Panc1 (cell line): ENCODE measurements at regions of chr18 and their contacts with region 1.

Region 1: GRCh38 chr18:22026889-22027288 is 142.5 kb upstream of the GATA6 start:
- DNase-seq: no peak
- ATAC-seq: no peak
- H3K4me3 ChIP-seq: no peak overlapping the region
- H3K27ac ChIP-seq: no peak overlapping the region
- H3K4me1 ChIP-seq: peaks cover 3% of the 10 kb centered on the region; the same call in 1 of the 2 replicates
- H3K27me3 ChIP-seq: no peaks in the 10 kb centered on the region
- CTCF ChIP-seq: no peak

Region 2: DNA sequence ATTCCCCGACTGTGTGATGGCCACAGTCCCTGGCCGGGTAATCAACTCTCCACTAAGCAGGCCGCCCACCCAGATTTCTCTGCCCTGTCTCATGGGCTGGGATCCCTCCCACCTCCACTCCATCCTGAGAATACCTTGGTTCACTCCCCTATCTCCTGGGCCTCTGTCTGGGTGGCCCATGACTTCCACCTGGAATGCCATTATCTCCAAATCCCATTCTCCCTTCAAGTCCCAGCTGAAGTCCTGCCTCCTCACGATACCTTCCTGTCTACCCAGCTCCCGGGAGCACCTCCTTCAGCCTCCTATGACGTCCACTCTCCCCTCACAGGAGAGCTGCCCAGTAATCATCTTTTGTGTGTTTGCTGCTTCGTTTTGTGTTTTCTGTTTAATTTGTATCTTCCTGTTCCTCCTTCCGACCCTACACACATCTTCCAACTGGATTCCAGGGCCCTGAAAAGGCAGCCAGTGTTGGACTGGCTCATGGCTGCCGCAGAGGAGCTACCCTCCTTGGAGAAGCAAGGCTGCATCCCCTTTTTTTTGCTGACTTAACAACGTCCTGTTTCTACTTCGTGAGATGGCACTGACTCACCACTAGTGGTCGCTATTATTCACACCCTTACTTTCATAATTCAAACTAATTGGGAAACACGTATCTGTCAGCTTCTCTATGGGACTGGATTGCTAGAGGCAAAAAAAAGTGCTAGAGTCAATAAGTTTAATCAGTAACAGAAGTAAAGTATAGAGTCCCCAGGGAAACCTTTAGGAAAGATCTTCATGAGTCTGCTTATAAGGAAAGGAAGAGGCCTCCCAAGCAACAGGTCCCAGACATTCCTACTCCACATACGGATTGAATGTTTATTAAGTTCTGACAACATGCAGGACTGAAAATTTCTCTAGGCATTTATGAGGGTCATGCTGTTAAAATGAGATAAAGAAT is 29.4 kb before region 1 on chr18:
- CTCF ChIA-PET with region 1: interaction called, 12 read pairs
- POLR2A ChIA-PET with region 1: no interaction called
- in situ Hi-C with region 1: no loop called
- intact Hi-C with region 1: no loop called
- DNase-seq: peak; percentile 46
- ATAC-seq: peak; percentile 73
- H3K4me3 ChIP-seq: no peak overlapping the region
- H3K27ac ChIP-seq: no peak overlapping the region
- H3K4me1 ChIP-seq: no peaks in the 10 kb centered on the region
- H3K27me3 ChIP-seq: no peaks in the 10 kb centered on the region
- CTCF ChIP-seq: peak; percentile 90

Region 3: GRCh38 chr18:22214731-22215528 is 188.0 kb after region 1 on chr18:
- CTCF ChIA-PET with region 1: no interaction called
- POLR2A ChIA-PET with region 1: no interaction called
- in situ Hi-C with region 1: no loop called
- intact Hi-C with region 1: no loop called
- DNase-seq: no peak
- ATAC-seq: no peak
- H3K4me3 ChIP-seq: no peak overlapping the region
- H3K27ac ChIP-seq: no peak overlapping the region
- H3K4me1 ChIP-seq: no peaks in the 10 kb centered on the region
- H3K27me3 ChIP-seq: no peaks in the 10 kb centered on the region
- CTCF ChIP-seq: no peak

Region 4: DNA sequence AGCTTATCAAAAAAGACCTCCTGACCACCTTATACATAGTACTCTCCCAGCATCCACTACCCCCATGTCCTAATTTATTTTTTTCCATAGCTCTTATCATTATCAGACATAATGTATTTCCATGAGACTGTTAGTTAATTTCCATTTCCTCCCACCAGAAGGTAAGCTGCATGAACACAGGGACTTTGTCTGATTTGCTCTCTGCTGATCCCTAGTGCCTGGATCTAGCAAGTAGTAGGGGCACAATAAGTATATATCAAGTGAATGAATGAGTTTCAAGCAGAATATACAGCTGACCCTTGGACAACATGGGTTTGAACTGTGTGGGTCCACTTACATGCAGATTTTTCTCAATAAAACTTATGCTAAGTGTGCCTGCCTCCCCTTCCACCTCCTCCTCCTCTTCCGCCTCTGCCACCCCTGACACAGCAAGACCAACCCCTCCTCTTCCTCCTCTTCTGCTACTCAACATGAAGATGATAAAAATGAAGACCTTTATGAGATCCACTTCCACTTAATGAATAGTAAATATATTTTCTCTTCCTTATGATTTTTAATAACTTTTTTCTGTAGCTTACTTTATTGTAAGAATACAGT is 337.1 kb after region 1 on chr18:
- CTCF ChIA-PET with region 1: no interaction called
- POLR2A ChIA-PET with region 1: no interaction called
- in situ Hi-C with region 1: no loop called
- intact Hi-C with region 1: no loop called
- DNase-seq: no peak
- ATAC-seq: no peak
- H3K4me3 ChIP-seq: no peak overlapping the region
- H3K27ac ChIP-seq: no peak overlapping the region
- H3K4me1 ChIP-seq: no peaks in the 10 kb centered on the region
- H3K27me3 ChIP-seq: peaks cover 10% of the 10 kb centered on the region
- CTCF ChIP-seq: no peak